PC-9 (cell line): ENCODE measurements at regions of chr9 and their contacts with region 1.

Region 1: DNA sequence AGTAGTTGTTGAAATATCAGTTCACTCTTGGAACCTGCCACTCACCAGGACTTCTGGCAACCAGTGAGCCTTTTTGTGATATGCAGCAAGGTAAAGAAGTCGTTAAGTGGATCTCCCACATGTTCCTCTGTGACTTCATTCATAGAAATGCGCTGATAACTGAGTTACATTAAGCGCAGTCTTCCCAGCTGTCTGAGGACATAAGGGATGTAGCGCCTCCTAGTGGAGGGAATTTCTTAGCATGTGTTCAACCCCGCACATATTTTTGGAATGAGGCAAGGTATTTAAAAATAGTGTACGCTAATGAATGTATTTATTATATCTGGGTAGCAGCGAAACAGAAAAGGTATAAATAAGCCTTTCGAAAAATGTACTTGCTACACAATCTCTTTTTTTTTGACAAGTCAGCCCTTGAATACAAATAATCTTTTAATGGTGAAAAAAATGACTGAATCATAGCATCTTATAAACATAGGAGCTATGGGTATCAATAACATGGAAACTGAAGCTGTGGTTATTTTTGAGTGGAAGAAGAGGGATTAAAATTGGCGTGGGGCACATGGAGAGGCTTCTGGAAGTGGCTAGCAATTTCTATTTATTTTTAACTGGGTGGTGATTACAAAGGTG is 38.0 kb downstream of the PALM2AKAP2 start:
- DNase-seq: peak; percentile 73 to 81
- H3K4me3 ChIP-seq: no peak overlapping the region
- H3K27ac ChIP-seq: peak overlapping the region; percentile 61; the same call in 1 of the 2 replicates
- H3K4me1 ChIP-seq: peaks cover 40% of the 10 kb centered on the region
- H3K27me3 ChIP-seq: no peaks in the 10 kb centered on the region
- CTCF ChIP-seq: peak; percentile 86

Region 2: DNA sequence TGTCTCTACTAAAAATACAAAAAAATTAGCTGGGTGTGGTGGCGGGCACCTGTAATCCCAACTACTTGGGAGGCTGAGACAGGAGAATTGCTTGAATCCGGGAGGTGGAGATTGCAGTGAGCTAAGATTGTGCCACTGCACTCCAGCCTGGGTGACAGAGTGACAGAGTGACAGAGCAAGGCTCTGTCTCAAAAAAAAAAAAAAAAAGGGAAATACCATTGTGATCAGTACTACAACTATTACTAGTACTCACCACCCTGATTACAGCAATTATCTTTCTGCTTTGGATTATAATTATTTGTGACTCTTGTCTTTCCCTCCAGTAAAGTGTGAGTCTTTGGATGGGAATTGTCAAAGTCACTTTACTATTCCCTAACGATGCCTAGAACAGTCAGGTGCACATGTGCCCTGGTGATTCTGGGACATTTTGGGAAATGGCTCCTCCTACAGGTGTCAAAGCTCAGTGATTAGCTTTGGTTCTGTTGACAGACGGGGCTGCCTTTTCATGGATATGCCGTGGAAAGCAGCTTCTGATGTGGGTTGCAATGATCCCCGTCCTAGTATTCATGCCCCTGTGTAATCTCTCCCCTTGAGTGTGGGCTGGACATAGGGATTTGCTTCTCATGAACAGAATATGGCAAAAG is 619.1 kb before region 1 on chr9:
- CTCF ChIA-PET with region 1: no interaction called
- POLR2A ChIA-PET with region 1: no interaction called
- intact Hi-C with region 1: no loop called
- DNase-seq: no peak
- H3K4me3 ChIP-seq: no peak overlapping the region
- H3K27ac ChIP-seq: no peak overlapping the region
- H3K4me1 ChIP-seq: no peaks in the 10 kb centered on the region
- H3K27me3 ChIP-seq: no peaks in the 10 kb centered on the region
- CTCF ChIP-seq: no peak; the same call in 1 of the 2 replicates

Region 3: GRCh38 chr9:109341565-109341964 is 476.4 kb before region 1 on chr9:
- CTCF ChIA-PET with region 1: no interaction called
- POLR2A ChIA-PET with region 1: no interaction called
- intact Hi-C with region 1: loop called (anchors 1 kb)
- DNase-seq: peak; percentile 55 to 73
- H3K4me3 ChIP-seq: no peak overlapping the region
- H3K27ac ChIP-seq: 0 out of 2 replicates have a peak overlapping the region, but pooled peaks have one; percentile 18
- H3K4me1 ChIP-seq: peaks cover 34% of the 10 kb centered on the region
- H3K27me3 ChIP-seq: no peaks in the 10 kb centered on the region
- CTCF ChIP-seq: no peak

Region 4: DNA sequence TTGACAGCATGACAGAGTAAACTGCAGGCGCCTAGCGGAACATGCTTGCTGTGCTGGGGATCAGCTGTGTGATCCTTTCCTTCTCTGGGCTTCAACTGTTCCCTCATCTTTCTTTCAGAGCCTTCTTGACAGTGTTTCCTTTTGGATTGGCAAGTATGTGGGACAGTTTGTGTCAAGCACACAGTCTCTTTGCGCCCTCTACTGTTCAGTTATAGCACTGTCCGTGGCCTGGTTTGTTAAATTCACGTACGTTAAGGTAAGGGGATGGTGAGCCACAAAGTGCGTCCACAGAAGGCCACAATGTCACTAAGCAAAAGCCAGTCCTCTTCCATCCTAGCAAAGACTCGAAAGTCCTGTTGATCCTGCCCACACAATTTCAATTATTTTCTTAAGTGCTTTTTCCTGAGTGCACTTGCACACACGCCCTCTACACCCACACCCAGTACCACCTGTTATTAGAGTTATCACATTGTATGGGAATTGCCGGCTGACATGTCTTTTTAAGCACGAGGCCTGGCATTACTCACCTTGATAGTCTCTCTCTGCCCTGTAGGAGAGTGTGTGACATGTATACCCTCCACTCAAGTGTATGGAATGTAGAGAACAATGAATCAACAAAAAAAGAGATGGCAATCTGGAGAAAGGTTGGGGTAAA is 297.4 kb before region 1 on chr9:
- CTCF ChIA-PET with region 1: no interaction called
- POLR2A ChIA-PET with region 1: no interaction called
- intact Hi-C with region 1: loop called (anchors 2 kb)
- DNase-seq: peak; percentile 71 to 91
- H3K4me3 ChIP-seq: no peak overlapping the region
- H3K27ac ChIP-seq: peak overlapping the region; percentile 61
- H3K4me1 ChIP-seq: peaks cover 46% of the 10 kb centered on the region
- H3K27me3 ChIP-seq: no peaks in the 10 kb centered on the region
- CTCF ChIP-seq: peak; percentile 95

Region 5: GRCh38 chr9:109652964-109653363 is 165.0 kb before region 1 on chr9:
- CTCF ChIA-PET with region 1: interaction called, 3 read pairs
- POLR2A ChIA-PET with region 1: no interaction called
- intact Hi-C with region 1: loop called (anchors 1 kb)
- DNase-seq: peak; percentile 43 to 59
- H3K4me3 ChIP-seq: no peak overlapping the region
- H3K27ac ChIP-seq: no peak overlapping the region
- H3K4me1 ChIP-seq: peaks cover 18% of the 10 kb centered on the region
- H3K27me3 ChIP-seq: no peaks in the 10 kb centered on the region
- CTCF ChIP-seq: peak; percentile 68

Region 6: DNA sequence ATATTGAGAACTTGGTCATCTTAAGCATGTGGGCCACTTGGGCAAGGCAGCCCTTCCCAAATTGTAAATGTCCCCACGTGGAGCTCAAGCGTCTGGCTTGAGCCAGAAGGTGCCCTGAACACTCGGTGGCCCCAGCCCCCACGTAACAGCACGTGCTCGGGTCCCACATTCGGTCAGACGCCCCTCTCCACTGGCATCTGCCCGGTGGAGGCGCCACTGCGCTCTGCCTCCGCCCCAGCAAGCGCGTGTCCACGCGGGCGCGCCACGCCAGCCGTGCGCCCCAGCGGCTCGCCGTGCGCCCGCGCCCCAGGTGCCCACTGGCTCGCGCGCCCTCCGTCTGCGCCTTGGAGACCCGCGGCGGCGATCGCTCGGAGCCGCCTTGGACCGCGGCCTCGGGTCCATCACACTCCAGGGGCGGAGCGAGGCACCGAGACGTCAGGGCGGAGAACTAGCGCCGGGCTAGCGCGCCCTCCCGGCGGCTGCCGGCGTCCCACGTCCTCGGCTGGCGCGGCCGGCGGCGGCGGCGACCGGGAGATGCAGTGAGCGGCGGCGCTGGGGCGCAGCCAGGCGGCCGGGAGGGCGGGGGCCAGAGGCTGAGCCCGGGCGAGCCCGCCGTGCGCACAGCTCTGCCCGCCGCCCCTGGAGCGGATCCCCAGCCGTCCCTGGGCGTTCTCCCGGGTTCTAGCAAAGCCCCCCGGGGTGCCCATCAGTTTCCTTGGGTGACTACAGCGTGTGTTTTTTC is 38.1 kb before region 1 on chr9 and contains the start of gene PALM2AKAP2:
- CTCF ChIA-PET with region 1: no interaction called
- POLR2A ChIA-PET with region 1: no interaction called
- intact Hi-C with region 1: loop called (anchors 5 kb)
- DNase-seq: peak; percentile 40 to 76
- H3K4me3 ChIP-seq: peak within 1 kb of the TSS; percentile 89
- H3K27ac ChIP-seq: peak within 1 kb of the TSS; percentile 5; the same call in 1 of the 2 replicates
- H3K4me1 ChIP-seq: peaks cover 11% of the 10 kb centered on the region
- H3K27me3 ChIP-seq: no peaks in the 10 kb centered on the region
- CTCF ChIP-seq: no peak
- total RNA-seq, gene PALM2AKAP2: 2.1 and 3.1 TPM in 2 replicates

Region 7: GRCh38 chr9:109799792-109800191 is 18.2 kb before region 1 on chr9:
- CTCF ChIA-PET with region 1: no interaction called
- POLR2A ChIA-PET with region 1: interaction called, 11 read pairs
- intact Hi-C with region 1: no loop called
- DNase-seq: no peak
- H3K4me3 ChIP-seq: no peak overlapping the region
- H3K27ac ChIP-seq: no peak overlapping the region
- H3K4me1 ChIP-seq: peaks cover 8% of the 10 kb centered on the region
- H3K27me3 ChIP-seq: no peaks in the 10 kb centered on the region
- CTCF ChIP-seq: no peak